CD4-positive, alpha-beta memory T cell (primary cell): ENCODE measurements at regions of chr11 and their contacts with region 1.

Region 1: GRCh38 chr11:64742889-64743590 is 902 bp downstream of the RASGRP2 start:
- DNase-seq: peak; percentile 65 to 83 (median 74)
- H3K4me3 ChIP-seq: peak overlapping the region; percentile 95 to 98
- H3K4me3 Mint-ChIP-seq: peak overlapping the region; percentile 17 to 99 (median 97)
- H3K27ac ChIP-seq: peak overlapping the region; percentile 81
- H3K27ac Mint-ChIP-seq: peak overlapping the region in 1 of 7 donors; percentile 96
- H3K4me1 ChIP-seq: peaks cover 38% of the 10 kb centered on the region
- H3K4me1 Mint-ChIP-seq: peaks cover 21 to 62% (median 35%) of the 10 kb centered on the region in 4 donors
- H3K27me3 ChIP-seq: no peaks in the 10 kb centered on the region
- H3K27me3 Mint-ChIP-seq: no peaks in the 10 kb centered on the region

Region 2: GRCh38 chr11:64317957-64318693 is 424.9 kb before region 1 on chr11 and contains the start of gene PRDX5:
- CTCF ChIA-PET with region 1: no interaction called
- POLR2A ChIA-PET with region 1: interaction called, 17 read pairs
- intact Hi-C with region 1: no loop called
- DNase-seq: peak; percentile 96 to 98 (median 97)
- H3K4me3 ChIP-seq: peak within 1 kb of the TSS; percentile 68 to 72
- H3K4me3 Mint-ChIP-seq: peak within 1 kb of the TSS; percentile 95 to 99 (median 96)
- H3K27ac ChIP-seq: peak within 1 kb of the TSS; percentile 96
- H3K27ac Mint-ChIP-seq: peak within 1 kb of the TSS; percentile 97 to 100 (median 100)
- H3K4me1 ChIP-seq: peaks cover 26% of the 10 kb centered on the region
- H3K4me1 Mint-ChIP-seq: peaks cover 17 to 44% (median 29%) of the 10 kb centered on the region in 4 donors
- H3K27me3 ChIP-seq: no peaks in the 10 kb centered on the region
- H3K27me3 Mint-ChIP-seq: no peaks in the 10 kb centered on the region
- total RNA-seq, gene PRDX5: 57.6 to 58.7 TPM

Region 3: GRCh38 chr11:64729851-64730382 is 13.1 kb before region 1 on chr11:
- CTCF ChIA-PET with region 1: interaction called, 11 read pairs
- POLR2A ChIA-PET with region 1: interaction called, 20 read pairs
- intact Hi-C with region 1: no loop called
- DNase-seq: peak in 1 of 5 donors; percentile 27
- H3K4me3 ChIP-seq: no peak overlapping the region
- H3K4me3 Mint-ChIP-seq: no peak overlapping the region
- H3K27ac ChIP-seq: no peak overlapping the region
- H3K27ac Mint-ChIP-seq: no peak overlapping the region
- H3K4me1 ChIP-seq: no peaks in the 10 kb centered on the region
- H3K4me1 Mint-ChIP-seq: peaks cover 14 to 23% (median 21%) of the 10 kb centered on the region in 4 donors
- H3K27me3 ChIP-seq: no peaks in the 10 kb centered on the region
- H3K27me3 Mint-ChIP-seq: no peaks in the 10 kb centered on the region

Region 4: DNA sequence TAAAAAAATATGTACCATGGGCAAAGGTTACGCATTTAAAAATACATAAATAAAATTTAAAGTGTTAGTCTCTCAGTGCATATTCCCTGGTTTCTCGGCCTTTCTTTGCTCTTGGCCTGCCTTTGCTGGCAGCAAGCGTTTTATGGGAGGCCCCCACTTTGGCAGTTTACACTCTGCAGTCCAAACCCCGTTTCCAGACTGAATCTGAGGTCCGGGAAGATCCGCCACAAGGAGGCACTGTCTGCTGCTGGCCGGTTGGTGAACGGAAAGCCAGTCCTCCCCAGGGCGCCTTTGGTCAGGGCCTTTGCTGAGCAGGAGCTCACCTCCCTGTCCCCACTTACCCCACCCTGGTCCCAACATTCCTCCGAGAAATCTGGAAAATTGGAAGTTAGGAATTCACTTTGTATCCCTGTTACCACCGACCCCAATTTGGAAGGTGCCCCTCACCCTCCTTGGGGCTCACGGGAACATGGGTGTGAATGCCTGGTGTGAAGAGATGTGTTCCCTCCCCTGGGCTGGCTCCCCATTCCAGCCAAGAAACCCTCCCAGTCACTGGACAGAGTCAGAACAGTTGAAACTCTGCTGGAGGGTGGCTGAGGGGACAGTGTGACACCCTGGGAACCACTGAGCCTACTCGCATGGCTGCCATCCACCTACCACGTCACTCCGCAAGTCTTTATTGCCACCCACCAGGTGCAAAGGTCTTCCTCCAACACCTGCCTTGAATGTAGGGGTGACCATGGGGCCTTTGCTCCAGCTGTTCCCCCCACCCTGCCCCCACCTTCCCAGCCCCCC is 44.7 kb after region 1 on chr11:
- CTCF ChIA-PET with region 1: interaction called, 7 read pairs
- POLR2A ChIA-PET with region 1: interaction called, 1,500 read pairs
- intact Hi-C with region 1: no loop called
- DNase-seq: peak; percentile 48 to 61 (median 52)
- H3K4me3 ChIP-seq: no peak overlapping the region
- H3K4me3 Mint-ChIP-seq: no peak overlapping the region
- H3K27ac ChIP-seq: no peak overlapping the region
- H3K27ac Mint-ChIP-seq: peak overlapping the region in 6 of 7 donors; percentile 48 to 90 (median 82)
- H3K4me1 ChIP-seq: peaks cover 6% of the 10 kb centered on the region
- H3K4me1 Mint-ChIP-seq: peaks cover 3 to 6% (median 4%) of the 10 kb centered on the region in 4 donors
- H3K27me3 ChIP-seq: no peaks in the 10 kb centered on the region
- H3K27me3 Mint-ChIP-seq: no peaks in the 10 kb centered on the region

Region 5: GRCh38 chr11:64834723-64835620 is 91.9 kb after region 1 on chr11:
- CTCF ChIA-PET with region 1: no interaction called
- POLR2A ChIA-PET with region 1: no interaction called
- intact Hi-C with region 1: no loop called
- DNase-seq: peak in 1 of 5 donors; percentile 34
- H3K4me3 ChIP-seq: no peak overlapping the region
- H3K4me3 Mint-ChIP-seq: no peak overlapping the region
- H3K27ac ChIP-seq: no peak overlapping the region
- H3K27ac Mint-ChIP-seq: no peak overlapping the region
- H3K4me1 ChIP-seq: no peaks in the 10 kb centered on the region
- H3K4me1 Mint-ChIP-seq: peaks cover 0 to 4% (median 3%) of the 10 kb centered on the region in 4 donors
- H3K27me3 ChIP-seq: no peaks in the 10 kb centered on the region
- H3K27me3 Mint-ChIP-seq: no peaks in the 10 kb centered on the region

Region 6: GRCh38 chr11:64846998-64847666 is 104.1 kb after region 1 on chr11:
- CTCF ChIA-PET with region 1: interaction called, 5 read pairs
- POLR2A ChIA-PET with region 1: interaction called, 22 read pairs
- intact Hi-C with region 1: loop called (anchors 2 kb)
- DNase-seq: peak; percentile 84 to 90 (median 88)
- H3K4me3 ChIP-seq: no peak overlapping the region
- H3K4me3 Mint-ChIP-seq: peak overlapping the region in 4 of 8 donors; percentile 20 to 62 (median 34)
- H3K27ac ChIP-seq: peak overlapping the region; percentile 23
- H3K27ac Mint-ChIP-seq: peak overlapping the region; percentile 11 to 89 (median 82)
- H3K4me1 ChIP-seq: peaks cover 65% of the 10 kb centered on the region
- H3K4me1 Mint-ChIP-seq: peaks cover 35 to 64% (median 49%) of the 10 kb centered on the region in 4 donors
- H3K27me3 ChIP-seq: no peaks in the 10 kb centered on the region
- H3K27me3 Mint-ChIP-seq: no peaks in the 10 kb centered on the region

Region 7: GRCh38 chr11:64878494-64879243 is 135.6 kb after region 1 on chr11 and contains the start of gene EHD1:
- CTCF ChIA-PET with region 1: no interaction called
- POLR2A ChIA-PET with region 1: interaction called, 21 read pairs
- intact Hi-C with region 1: no loop called
- DNase-seq: peak; percentile 99 to 100 (median 99)
- H3K4me3 ChIP-seq: peak within 1 kb of the TSS; percentile 82 to 99
- H3K4me3 Mint-ChIP-seq: peak within 1 kb of the TSS; percentile 99 to 100 (median 99)
- H3K27ac ChIP-seq: peak within 1 kb of the TSS; percentile 92
- H3K27ac Mint-ChIP-seq: peak within 1 kb of the TSS; percentile 96 to 98 (median 97)
- H3K4me1 ChIP-seq: peaks cover 58% of the 10 kb centered on the region
- H3K4me1 Mint-ChIP-seq: peaks cover 34 to 77% (median 47%) of the 10 kb centered on the region in 4 donors
- H3K27me3 ChIP-seq: no peaks in the 10 kb centered on the region
- H3K27me3 Mint-ChIP-seq: no peaks in the 10 kb centered on the region
- total RNA-seq, gene EHD1: 268 to 279 TPM